Sigmoid colon (tissue), 7 donors: ENCODE measurements at regions of chr12 and their contacts with region 1.

Region 1: DNA sequence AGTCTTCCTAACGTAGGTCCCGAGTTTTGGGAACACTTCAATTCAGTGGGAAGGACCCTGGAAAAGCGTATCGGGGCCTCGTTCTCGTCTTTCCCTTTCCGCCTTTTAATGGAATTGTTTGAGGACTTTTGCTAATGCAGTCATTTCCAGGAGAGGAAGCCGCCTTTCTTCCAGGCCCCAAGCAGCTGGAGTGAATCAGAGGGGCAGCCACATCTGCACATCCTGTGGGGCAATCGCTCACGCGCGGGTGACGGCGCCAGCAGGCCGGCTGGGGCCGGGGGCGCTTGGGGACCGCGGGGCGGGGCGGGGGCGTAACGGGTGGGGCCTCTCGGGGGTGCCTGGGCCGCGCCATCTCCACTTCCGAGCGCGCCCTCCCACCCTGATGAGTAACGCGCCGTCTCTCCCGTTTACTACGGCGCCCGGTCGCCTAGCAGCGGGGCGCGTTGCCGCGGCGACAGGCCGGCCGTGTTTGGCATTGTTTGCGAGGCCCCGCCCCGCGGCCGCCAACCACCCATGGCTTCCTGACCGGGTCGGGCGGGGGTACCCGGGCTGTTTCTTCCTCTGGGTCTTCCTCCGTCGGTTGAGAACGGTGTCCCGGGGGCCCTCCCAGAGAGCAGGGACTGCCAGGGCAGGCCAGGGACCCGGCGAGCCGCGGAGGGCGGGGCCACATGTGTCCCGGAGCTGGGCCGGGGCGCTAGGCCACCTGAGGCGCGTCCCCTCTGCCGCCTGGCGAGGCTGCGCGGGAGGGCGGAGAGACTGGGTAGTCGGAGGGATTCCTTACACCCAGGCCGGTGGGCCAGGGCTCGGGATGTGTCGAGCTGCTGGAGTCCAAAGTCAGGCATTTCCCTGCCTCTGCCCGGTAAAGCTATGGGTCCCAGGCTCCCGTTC is 2.3 kb downstream of the GSG1 start:
- DNase-seq: peak; percentile 95
- H3K4me3 ChIP-seq: peak overlapping the region; percentile 46 to 59 (median 54)
- H3K27ac ChIP-seq: peak overlapping the region; percentile 78 to 93 (median 80)
- H3K4me1 ChIP-seq: peaks cover 0 to 45% (median 29%) of the 10 kb centered on the region in 4 donors
- H3K27me3 ChIP-seq: no peaks in the 10 kb centered on the region
- CTCF ChIP-seq: no peak
- EP300 ChIP-seq: peak in 3 of 4 donors; percentile 18 to 78 (median 75)
- POLR2A ChIP-seq: no peak

Region 2: GRCh38 chr12:13044002-13044905 is 56.9 kb before region 1 on chr12 and contains the start of gene FAM234B:
- intact Hi-C with region 1: loop called (anchors 5 kb)
- DNase-seq: peak; percentile 88
- H3K4me3 ChIP-seq: peak within 1 kb of the TSS; percentile 84 to 99 (median 96)
- H3K27ac ChIP-seq: peak within 1 kb of the TSS; percentile 68 to 78 (median 75)
- H3K4me1 ChIP-seq: peaks cover 0 to 23% (median 17%) of the 10 kb centered on the region in 4 donors
- H3K27me3 ChIP-seq: no peaks in the 10 kb centered on the region
- CTCF ChIP-seq: no peak
- EP300 ChIP-seq: no peak
- POLR2A ChIP-seq: peak in 1 of 2 donors; percentile 11
- total RNA-seq, gene FAM234B: 2.9 to 5.0 (median 4.7) TPM

Region 3: GRCh38 chr12:13196130-13196921 is 95.2 kb after region 1 on chr12 and contains the start of gene EMP1:
- intact Hi-C with region 1: loop called (anchors 5 kb)
- DNase-seq: peak; percentile 98
- H3K4me3 ChIP-seq: peak within 1 kb of the TSS; percentile 34 to 50 (median 44)
- H3K27ac ChIP-seq: peak within 1 kb of the TSS; percentile 74 to 88 (median 78)
- H3K4me1 ChIP-seq: peaks cover 0 to 26% (median 21%) of the 10 kb centered on the region in 4 donors
- H3K27me3 ChIP-seq: no peaks in the 10 kb centered on the region
- CTCF ChIP-seq: no peak
- EP300 ChIP-seq: peak in 1 of 4 donors; percentile 15
- POLR2A ChIP-seq: peak; percentile 37 to 72
- total RNA-seq, gene EMP1: 72.1 to 172 (median 94.2) TPM

Region 4: DNA sequence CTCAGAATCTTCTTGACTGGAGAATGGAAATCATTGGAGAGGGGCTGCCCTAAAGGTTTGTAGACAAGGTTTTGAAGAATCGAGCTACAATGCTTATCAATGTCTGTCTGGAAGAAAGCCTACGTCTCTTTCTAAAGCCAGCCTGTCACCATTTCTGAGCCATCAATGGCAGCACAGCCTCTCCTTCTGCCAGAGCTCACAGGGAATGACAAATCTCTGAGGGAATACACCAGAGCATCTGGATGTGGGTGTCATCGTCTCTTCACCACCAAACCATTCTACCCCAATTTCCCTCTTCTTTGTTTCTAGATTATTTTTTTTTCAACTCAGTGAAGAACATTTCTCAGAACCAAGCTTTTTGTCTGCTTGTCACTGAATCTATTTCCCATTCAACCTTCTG is 445.1 kb after region 1 on chr12:
- intact Hi-C with region 1: no loop called
- DNase-seq: no peak
- H3K4me3 ChIP-seq: no peak overlapping the region
- H3K27ac ChIP-seq: no peak overlapping the region
- H3K4me1 ChIP-seq: no peaks in the 10 kb centered on the region
- H3K27me3 ChIP-seq: peaks cover 0 to 3% (median 0%) of the 10 kb centered on the region in 3 donors
- CTCF ChIP-seq: no peak
- EP300 ChIP-seq: no peak
- POLR2A ChIP-seq: no peak